Activated CD8-positive, alpha-beta T cell treated with anti-CD3 and anti-CD28 coated beads for 36 hours (primary cell): ENCODE measurements at regions of chr13 and their contacts with region 1.

Region 1: DNA sequence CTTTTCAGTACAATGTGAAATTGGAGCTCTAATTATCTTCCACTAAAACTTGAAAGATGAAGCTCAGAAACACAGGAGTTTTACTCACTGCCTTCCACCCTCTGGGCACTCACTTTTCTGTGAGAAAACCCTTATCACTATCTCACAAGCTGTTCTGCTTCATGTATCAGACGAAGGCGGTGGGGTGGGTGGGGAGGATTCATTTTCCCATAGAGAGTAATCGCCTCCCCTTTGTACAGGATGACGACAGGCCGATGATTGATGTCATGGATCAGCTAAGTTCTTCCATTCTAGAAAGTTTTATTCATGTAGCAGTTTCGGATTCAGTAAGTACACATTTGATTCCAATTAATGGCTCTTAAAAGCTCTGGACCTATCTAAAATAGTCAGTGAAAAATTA is 139.9 kb downstream of the ZAR1L start:
- DNase-seq: no peak
- ATAC-seq: no peak
- H3K4me3 Mint-ChIP-seq: no peak overlapping the region
- H3K27ac Mint-ChIP-seq: no peak overlapping the region
- H3K4me1 Mint-ChIP-seq: no peaks in the 10 kb centered on the region
- H3K27me3 Mint-ChIP-seq: no peaks in the 10 kb centered on the region
- CTCF ChIP-seq: no peak

Region 2: GRCh38 chr13:32098272-32098671 is 77.0 kb before region 1 on chr13:
- CTCF ChIA-PET with region 1: no interaction called
- POLR2A ChIA-PET with region 1: no interaction called
- intact Hi-C with region 1: no loop called
- DNase-seq: no peak
- ATAC-seq: no peak
- H3K4me3 Mint-ChIP-seq: no peak overlapping the region
- H3K27ac Mint-ChIP-seq: no peak overlapping the region
- H3K4me1 Mint-ChIP-seq: no peaks in the 10 kb centered on the region
- H3K27me3 Mint-ChIP-seq: peaks cover 2% of the 10 kb centered on the region
- CTCF ChIP-seq: no peak

Region 3: GRCh38 chr13:32153056-32153455 is 22.3 kb before region 1 on chr13:
- CTCF ChIA-PET with region 1: no interaction called
- POLR2A ChIA-PET with region 1: no interaction called
- intact Hi-C with region 1: no loop called
- DNase-seq: no peak
- ATAC-seq: no peak
- H3K4me3 Mint-ChIP-seq: no peak overlapping the region
- H3K27ac Mint-ChIP-seq: no peak overlapping the region
- H3K4me1 Mint-ChIP-seq: no peaks in the 10 kb centered on the region
- H3K27me3 Mint-ChIP-seq: no peaks in the 10 kb centered on the region
- CTCF ChIP-seq: no peak

Region 4: GRCh38 chr13:32164622-32165268 is 10.6 kb before region 1 on chr13:
- CTCF ChIA-PET with region 1: interaction called, 26 read pairs
- POLR2A ChIA-PET with region 1: no interaction called
- intact Hi-C with region 1: no loop called
- DNase-seq: peak; percentile 15
- ATAC-seq: peak; percentile 69
- H3K4me3 Mint-ChIP-seq: no peak overlapping the region
- H3K27ac Mint-ChIP-seq: no peak overlapping the region
- H3K4me1 Mint-ChIP-seq: no peaks in the 10 kb centered on the region
- H3K27me3 Mint-ChIP-seq: no peaks in the 10 kb centered on the region
- CTCF ChIP-seq: peak; percentile 30